Right ventricle myocardium inferior (tissue), 1 donor: ENCODE measurements at regions of chr7 and their contacts with region 1.

Region 1: DNA sequence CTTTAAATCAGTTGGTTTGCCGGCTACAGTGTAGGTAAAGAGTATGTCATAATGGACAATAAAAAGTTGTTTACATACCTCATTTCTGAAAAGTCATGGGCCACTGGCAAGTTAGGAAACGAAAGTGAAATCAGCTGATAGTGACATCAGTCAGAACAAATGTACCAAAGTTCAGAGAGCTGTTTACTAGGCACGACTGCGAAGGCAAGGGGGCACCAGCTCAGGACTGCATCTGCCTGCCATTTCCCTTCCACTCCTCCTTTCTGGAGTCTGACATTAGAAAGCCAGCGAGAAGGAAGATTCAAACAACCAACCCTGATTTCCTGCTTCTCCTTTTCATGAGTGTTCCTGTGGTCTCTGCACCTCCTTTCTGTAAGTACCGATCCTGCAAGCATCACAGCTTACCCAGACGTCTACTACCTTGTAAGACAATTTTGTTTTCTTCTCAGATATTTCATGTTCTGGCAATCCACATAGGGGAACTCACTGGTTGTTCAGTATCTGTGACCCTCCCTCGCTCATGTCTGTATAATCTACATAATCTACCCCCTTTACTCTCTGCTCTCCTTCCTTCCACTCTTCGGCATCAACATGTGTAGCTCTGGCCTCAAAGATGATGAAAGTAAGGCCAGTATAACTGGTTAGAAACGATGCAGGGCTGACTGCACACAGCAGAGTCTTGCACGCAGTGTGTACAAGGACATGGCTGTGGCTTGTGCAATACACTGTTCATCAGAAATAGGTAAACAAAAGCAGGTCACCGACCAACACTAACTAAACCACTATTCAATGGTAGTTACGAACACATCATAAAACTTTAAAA is at the start of gene TMEM140:
- DNase-seq: peak; percentile 66
- ATAC-seq: peak; percentile 71
- total RNA-seq, gene TMEM140: 24.3 TPM

Region 2: DNA sequence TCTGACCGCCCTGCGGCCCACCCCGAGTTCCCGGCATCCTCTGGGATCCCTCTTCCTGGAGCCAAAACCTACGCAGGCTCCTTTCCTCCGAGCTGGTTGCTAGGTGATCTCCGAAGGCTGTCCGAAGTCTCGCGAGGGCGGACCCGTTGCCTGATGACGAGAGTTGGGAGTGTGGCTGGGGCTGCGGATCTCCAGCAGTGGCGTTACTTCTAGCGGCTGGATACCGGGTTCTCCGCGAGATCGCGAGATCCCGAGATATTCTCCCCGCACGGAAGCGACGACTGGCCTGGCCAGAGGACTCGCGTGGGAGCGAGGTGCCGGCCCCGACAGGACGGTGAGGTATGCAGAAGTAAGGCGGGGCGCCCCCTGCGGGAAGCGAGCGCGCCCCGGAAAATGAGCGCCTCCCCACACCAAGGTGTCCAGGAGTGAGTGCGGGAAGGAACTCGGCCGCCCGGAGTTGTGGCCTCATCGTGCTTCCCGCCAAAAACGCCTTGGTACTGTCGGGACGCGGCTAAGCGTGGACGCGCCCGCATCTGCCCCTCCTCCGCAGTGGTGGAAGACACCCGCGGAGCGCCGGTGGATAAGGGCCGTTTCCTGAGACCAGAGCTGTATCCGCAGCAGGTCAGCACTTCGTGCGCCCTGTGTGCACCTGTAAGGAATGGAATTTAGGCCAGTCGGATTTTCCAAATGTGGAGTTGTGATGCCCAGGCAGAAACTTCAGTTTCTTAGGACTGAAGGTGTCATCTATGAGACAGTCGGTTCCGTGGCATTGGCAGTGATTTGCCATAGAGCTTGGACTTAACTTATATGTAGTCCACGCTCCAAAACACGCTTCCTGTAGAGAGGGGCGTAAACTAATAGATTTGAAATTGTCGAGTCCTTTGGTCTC is 161.5 kb before region 1 on chr7 and contains the start of gene AGBL3:
- intact Hi-C with region 1: loop called (anchors 2 kb)
- DNase-seq: peak; percentile 99
- ATAC-seq: peak; percentile 98
- total RNA-seq, gene AGBL3: 2.2 TPM

Region 3: DNA sequence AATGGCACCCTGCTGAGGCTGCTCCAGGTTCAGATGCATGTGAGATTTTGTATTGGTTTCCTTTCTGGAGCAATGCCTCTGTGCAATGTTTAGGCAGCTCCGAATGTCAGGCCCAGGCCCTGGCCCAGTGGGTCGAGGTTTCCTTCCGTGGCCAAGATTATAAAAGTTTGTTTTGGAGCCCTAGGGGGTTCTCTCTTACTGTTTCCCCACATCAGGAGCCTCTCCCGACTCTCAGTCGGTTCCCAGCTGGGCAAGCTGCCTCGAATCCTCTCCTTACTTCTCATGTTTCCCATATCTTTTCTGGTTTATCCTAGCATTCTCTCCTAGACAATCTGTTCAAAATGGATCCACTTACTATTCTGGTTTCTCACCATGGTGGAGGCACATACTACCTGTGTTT is 10.8 kb after region 1 on chr7:
- intact Hi-C with region 1: loop called (anchors 1 kb)
- DNase-seq: peak; percentile 42
- ATAC-seq: peak; percentile 2